ENCODE measurements at regions of chr22 and their contacts with region 1.

Region 1: DNA sequence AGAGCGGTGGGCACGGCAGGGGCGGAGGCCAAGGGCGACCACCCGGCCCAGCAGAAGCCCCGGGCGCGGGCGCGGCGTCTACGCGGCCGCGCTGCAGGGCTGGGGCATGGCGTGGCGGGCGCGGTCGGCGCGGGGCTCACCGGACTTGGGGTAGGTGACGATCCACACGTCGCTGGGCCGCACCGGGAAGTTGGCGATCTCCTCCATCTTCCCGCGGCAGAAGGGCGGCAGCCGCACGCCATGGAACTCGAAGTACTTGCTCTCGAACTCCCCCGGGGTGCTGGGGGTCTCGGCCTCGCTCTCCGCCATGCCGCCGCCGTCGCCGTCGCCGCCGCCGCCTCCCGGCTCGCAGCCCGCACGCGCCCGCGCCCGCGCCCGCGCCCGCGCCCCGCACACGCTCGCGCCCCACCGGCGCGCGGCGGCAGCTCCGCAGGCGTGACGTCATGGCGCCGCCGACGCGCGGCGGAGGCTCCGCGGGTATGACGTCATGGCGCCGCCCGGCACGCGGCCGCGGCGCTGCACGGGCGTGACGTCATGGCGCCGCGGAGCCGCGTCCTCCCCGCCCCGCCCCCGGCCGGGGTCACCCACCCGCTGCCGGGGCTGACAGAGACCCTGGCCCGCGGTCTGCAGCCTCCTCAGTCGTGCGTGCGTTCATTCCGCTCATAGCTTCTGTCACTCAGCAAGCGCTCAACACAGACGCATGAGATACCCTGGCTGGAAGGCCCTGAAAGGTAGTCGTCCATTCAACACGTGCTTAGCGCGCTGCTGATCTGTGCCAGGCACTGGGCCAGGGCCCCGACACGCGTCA is at the start of gene SULT4A1:
- DNase-seq: peak; percentile 39
- H3K4me3 ChIP-seq: peak within 1 kb of the TSS; percentile 19
- H3K27ac ChIP-seq: no peak within 1 kb of the TSS
- H3K4me1 ChIP-seq: no peaks in the 10 kb centered on the region
- H3K27me3 ChIP-seq: peaks cover 58% of the 10 kb centered on the region
- CTCF ChIP-seq: no peak
- total RNA-seq, gene SULT4A1: 0.15 and 0.33 TPM in 2 replicates

Region 2: DNA sequence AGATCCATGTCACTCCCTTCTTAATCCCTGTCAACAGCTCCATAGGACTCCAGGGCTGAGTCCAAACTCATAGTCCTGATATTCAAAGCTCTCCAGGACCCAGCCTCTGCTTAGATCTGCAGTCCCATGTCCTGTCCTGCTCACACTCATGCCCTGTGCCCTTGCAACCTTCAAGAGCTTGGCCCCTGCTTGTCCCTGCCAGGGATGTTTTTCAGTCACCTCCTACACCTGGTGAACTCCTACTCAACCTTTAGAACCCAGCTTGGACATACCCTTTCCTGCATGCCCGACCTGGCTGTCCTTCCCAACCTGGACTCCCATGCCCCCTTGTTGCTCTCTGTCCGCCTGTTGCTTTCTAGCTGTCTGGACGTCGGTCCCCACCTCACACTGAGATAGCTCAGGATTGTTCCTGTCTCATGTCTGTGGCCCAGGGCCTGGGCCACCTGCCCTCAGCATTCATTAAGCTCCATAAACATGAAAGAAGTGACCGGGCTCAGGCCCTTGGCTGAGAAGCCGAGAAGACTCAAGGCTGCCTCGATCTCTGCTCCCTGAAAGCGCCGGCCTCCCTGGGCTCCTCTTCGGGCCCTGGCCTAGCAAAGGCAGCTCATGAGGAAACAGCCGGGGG is 684.5 kb after region 1 on chr22:
- CTCF ChIA-PET with region 1: interaction called, 11 read pairs
- POLR2A ChIA-PET with region 1: no interaction called
- intact Hi-C with region 1: no loop called
- DNase-seq: no peak
- H3K4me3 ChIP-seq: no peak overlapping the region
- H3K27ac ChIP-seq: no peak overlapping the region
- H3K4me1 ChIP-seq: no peaks in the 10 kb centered on the region
- H3K27me3 ChIP-seq: no peaks in the 10 kb centered on the region
- CTCF ChIP-seq: no peak

Measured in A673 (cell line).